ENCODE measurements at regions of chr12 and their contacts with region 1.

Region 1: GRCh38 chr12:8681041-8681902 is 16.5 kb upstream of the RIMKLB start:
- DNase-seq: peak in 1 of 3 donors; percentile 9
- ATAC-seq: peak; percentile 45
- H3K4me3 ChIP-seq: no peak overlapping the region
- H3K4me1 ChIP-seq: peaks cover 4% of the 10 kb centered on the region
- CTCF ChIP-seq: no peak

Region 2: GRCh38 chr12:8823565-8824300 is 142.5 kb after region 1 on chr12:
- intact Hi-C with region 1: loop called (anchors 5 to 10 kb)
- DNase-seq: no peak
- ATAC-seq: no peak
- H3K4me3 ChIP-seq: no peak overlapping the region
- H3K4me1 ChIP-seq: no peaks in the 10 kb centered on the region
- CTCF ChIP-seq: no peak

Measured in mucosa of descending colon (tissue), 3 donors.